Posterior vena cava (tissue), 2 donors: ENCODE measurements at regions of chr1 and their contacts with region 1.

Region 1: GRCh38 chr1:48294656-48295055 is 72.1 kb downstream of the SLC5A9 start:
- DNase-seq: no peak

Region 2: GRCh38 chr1:47241114-47242113 is 1053.2 kb before region 1 on chr1:
- intact Hi-C with region 1: loop called in 1 of 2 experiments (anchors 5 kb)
- DNase-seq: no peak

Region 3: GRCh38 chr1:47675047-47675675 is 619.5 kb before region 1 on chr1:
- intact Hi-C with region 1: no loop called
- DNase-seq: no peak

Region 4: DNA sequence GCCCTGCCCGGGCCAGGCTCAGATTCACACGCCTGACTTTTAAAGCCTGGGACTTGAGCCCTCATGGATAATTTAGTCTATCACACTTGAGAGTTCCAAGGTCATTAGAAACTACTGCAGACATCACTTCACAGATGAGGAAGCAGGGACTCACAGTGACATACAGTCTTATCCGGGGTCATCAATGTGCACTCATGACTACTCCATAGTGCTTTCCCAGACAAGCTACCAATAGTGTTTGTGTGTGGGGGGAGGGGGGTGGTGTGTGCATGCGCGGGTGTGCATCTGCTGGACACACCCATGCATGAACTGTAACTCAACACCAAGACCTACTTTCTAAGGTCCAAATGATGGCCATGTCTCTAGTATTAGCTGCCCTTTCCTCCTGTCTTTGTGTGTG is 88.3 kb before region 1 on chr1:
- intact Hi-C with region 1: no loop called
- DNase-seq: no peak

Region 5: GRCh38 chr1:48216941-48217340 is 77.7 kb before region 1 on chr1:
- intact Hi-C with region 1: no loop called
- DNase-seq: no peak

Region 6: DNA sequence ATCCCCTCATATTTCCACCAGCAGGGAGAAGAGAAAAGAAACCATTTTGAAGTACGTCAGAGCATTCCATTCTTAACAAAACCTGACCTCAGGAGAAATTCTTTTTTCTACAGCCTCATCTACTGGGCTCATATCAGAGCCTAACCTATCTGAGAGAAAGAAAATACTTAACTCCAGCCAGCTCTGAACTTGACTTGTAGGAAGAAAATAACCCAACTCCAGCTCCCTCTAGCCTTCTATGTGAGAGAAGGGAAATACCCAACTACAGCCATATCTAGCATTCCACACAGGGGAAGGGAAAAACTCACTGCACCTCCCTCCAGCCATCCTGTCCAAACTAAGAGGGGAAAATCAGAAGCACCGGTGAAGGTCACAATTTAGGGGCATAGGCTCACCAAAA is 119.6 kb after region 1 on chr1:
- intact Hi-C with region 1: no loop called
- DNase-seq: no peak